Heart right ventricle (tissue), 16 donors: ENCODE measurements at regions of chr14 and their contacts with region 1.

Region 1: GRCh38 chr14:77799863-77800730 is at the start of gene ADCK1:
- DNase-seq: peak; percentile 90 to 91
- ATAC-seq: peak; percentile 95 to 98 (median 96)
- H3K4me3 ChIP-seq: peak within 1 kb of the TSS; percentile 43 to 95 (median 82)
- H3K27ac ChIP-seq: peak within 1 kb of the TSS; percentile 79 to 98 (median 92)
- H3K4me1 ChIP-seq: peaks cover 0 to 30% (median 8%) of the 10 kb centered on the region in 9 donors
- H3K27me3 ChIP-seq: no peaks in the 10 kb centered on the region
- CTCF ChIP-seq: peak in 7 of 9 donors; percentile 23 to 58 (median 43)
- total RNA-seq, gene ADCK1: 6.2 to 9.9 (median 7.3) TPM

Region 2: DNA sequence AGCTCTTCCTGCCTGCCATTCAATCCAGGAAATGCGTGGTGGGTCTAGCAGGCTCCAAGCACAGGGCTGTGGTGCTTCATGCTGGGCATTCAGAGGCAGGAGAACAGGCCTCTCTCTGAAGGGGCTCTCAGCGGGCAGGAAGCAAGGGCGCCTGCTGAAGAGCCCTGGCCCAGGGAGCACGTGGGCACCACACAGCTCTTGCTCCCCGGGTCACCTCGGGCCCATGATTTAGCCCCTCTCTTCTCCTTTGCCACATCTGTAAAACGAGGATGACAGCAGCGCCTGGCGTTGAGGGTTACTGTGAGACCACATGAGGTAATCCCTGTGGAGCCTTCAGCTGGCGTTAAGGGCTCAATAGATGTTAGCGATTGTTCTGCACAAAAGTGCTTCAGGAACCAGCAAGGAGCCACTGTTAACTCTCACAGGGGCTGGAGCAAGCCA is 146.1 kb before region 1 on chr14:
- intact Hi-C with region 1: loop called in 1 of 10 experiments (anchors 10 kb)
- DNase-seq: no peak
- ATAC-seq: no peak
- H3K4me3 ChIP-seq: no peak overlapping the region
- H3K27ac ChIP-seq: peak overlapping the region in 1 of 10 donors; percentile 1
- H3K4me1 ChIP-seq: peaks cover 0 to 27% (median 3%) of the 10 kb centered on the region in 9 donors
- H3K27me3 ChIP-seq: no peaks in the 10 kb centered on the region
- CTCF ChIP-seq: no peak

Region 3: DNA sequence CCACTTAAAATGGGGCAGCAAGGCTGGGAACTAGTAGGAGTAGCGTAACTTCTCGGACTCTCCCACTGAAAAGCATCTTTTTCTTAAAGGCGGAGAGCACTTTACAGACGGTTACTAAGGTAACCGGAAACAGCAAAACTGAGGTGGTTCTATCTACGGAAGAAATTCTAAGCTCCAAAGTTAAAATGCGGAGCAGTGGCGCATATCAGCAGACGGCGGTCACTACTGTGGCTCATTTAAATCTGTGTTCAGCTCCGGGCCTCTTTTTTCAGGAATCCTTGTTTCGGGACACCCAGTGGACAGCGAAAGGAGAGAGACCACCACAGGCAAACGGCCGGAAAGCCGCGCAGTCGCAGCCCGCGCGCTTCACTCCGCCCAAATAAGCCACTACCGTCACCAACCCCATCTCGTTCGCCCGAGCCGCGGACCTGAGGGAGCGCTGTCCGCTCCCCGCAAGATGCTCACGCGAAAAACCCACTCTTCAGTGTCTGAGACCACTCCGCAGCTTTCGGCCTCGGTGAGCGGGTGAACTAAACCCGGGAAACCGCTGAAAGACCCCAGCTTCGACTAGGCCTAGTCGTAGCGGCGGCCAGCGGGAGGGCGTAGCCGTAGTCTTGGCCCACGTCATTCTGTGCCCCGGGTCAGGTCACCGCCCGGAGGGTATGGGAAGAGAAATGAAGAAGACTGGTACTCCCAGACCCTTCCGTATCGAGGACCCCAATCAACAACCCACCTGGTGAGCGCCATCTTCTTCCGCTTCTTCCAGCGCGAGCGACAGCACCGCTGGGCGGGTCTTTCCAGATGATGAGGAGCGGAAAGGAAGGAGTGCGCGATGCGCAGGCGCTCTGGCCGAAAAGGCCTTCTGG is 39.5 kb before region 1 on chr14 and contains the start of gene SNW1:
- intact Hi-C with region 1: loop called in 7 of 10 experiments (anchors 1 to 5 kb)
- DNase-seq: peak; percentile 90 to 93
- ATAC-seq: peak; percentile 96 to 99 (median 98)
- H3K4me3 ChIP-seq: peak within 1 kb of the TSS; percentile 70 to 97 (median 90)
- H3K27ac ChIP-seq: peak within 1 kb of the TSS; percentile 74 to 98 (median 94)
- H3K4me1 ChIP-seq: peaks cover 0 to 48% (median 35%) of the 10 kb centered on the region in 9 donors
- H3K27me3 ChIP-seq: no peaks in the 10 kb centered on the region
- CTCF ChIP-seq: peak in 1 of 9 donors; percentile 9
- total RNA-seq, gene SNW1: 46.8 to 69.1 (median 56.2) TPM